Ascending aorta (tissue), 2 donors: ENCODE measurements at regions of chr17 and their contacts with region 1.

Region 1: GRCh38 chr17:42720996-42721583 is 23.8 kb downstream of the EZH1 start:
- DNase-seq: no peak
- H3K4me3 ChIP-seq: no peak overlapping the region
- H3K27ac ChIP-seq: no peak overlapping the region
- H3K4me1 ChIP-seq: no peaks in the 10 kb centered on the region
- H3K27me3 ChIP-seq: no peaks in the 10 kb centered on the region
- CTCF ChIP-seq: peak; percentile 65 to 73 (median 67)

Region 2: GRCh38 chr17:42760652-42761581 is 39.8 kb after region 1 on chr17 and contains the start of gene RAMP2:
- intact Hi-C with region 1: loop called (anchors 1 kb)
- DNase-seq: no peak
- H3K4me3 ChIP-seq: peak within 1 kb of the TSS; percentile 71 to 78
- H3K27ac ChIP-seq: peak within 1 kb of the TSS in 1 of 2 donors; percentile 55
- H3K4me1 ChIP-seq: peaks cover 8 to 10% of the 10 kb centered on the region in 2 donors
- H3K27me3 ChIP-seq: peaks cover 13% of the 10 kb centered on the region
- CTCF ChIP-seq: no peak
- total RNA-seq, gene RAMP2: 80.5 TPM

Region 3: DNA sequence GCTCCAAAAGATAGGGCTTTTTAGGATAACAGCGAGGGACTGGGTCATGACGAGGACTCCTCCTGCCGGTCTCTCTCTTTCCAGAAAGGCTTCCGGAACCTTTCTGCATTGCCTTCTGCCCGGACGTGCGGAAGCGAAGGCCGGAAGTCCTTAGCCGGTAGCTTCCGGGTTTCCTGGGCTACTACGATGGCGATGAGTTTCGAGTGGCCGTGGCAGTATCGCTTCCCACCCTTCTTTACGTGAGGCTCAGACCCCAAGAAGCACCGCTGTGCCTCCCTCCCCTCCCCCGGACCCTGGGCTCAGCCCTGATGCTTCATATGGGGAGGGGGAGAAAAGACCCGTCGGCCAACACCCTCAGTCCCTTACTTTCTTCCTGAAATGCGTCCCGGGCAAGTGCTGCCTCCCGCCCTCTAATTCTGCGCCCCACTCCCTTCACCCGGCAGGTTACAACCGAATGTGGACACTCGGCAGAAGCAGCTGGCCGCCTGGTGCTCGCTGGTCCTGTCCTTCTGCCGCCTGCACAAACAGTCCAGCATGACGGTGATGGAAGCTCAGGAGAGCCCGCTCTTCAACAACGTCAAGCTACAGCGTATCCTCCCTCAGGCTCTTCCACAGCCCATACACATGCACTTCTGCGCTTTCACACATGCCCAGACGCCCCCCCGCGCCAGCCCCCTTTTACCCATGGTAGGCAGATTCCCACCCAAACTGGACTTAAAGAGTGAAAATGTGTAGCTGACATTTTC is 52.4 kb after region 1 on chr17 and contains the start of gene VPS25:
- intact Hi-C with region 1: loop called (anchors 2 kb)
- DNase-seq: peak; percentile 17 to 87
- H3K4me3 ChIP-seq: peak within 1 kb of the TSS; percentile 79 to 81
- H3K27ac ChIP-seq: peak within 1 kb of the TSS; percentile 68 to 85
- H3K4me1 ChIP-seq: peaks cover 4 to 5% of the 10 kb centered on the region in 2 donors
- H3K27me3 ChIP-seq: no peaks in the 10 kb centered on the region
- CTCF ChIP-seq: peak in 1 of 3 experiments; percentile 13
- total RNA-seq, gene VPS25: 40.9 TPM

Region 4: DNA sequence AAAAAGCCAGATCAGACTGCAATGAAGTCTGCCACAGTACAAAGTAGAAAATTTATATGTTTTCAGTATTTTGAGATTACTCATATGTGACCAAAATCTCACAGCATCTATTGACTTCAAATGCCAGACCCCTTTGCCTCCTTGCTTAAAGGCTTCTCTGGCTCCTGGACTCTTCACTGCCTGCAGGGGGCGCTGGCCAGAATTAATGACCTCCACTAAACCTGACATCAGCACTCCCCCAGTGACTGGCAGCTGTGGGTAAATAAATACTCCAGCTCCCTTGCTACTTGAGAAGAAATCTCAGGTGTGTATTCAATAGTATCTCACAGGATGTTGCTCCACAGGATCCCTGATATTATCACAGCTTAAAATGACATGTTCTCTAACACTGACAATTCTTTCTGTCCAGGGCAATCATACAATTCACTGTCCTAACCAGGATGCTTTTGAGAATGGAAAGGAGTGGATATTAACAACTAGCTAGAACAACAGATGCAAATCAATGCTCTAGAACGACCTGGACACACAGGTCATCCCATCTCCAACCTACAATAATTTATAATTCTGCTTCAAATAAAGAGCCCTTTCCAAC is 99.0 kb after region 1 on chr17:
- intact Hi-C with region 1: loop called (anchors 5 kb)
- DNase-seq: no peak
- H3K4me3 ChIP-seq: no peak overlapping the region
- H3K27ac ChIP-seq: no peak overlapping the region
- H3K4me1 ChIP-seq: peaks cover 6 to 12% of the 10 kb centered on the region in 2 donors
- H3K27me3 ChIP-seq: no peaks in the 10 kb centered on the region
- CTCF ChIP-seq: peak in 2 of 3 experiments; percentile 49 to 58

Region 5: GRCh38 chr17:42937712-42938596 is 216.9 kb after region 1 on chr17:
- intact Hi-C with region 1: loop called (anchors 2 kb)
- DNase-seq: no peak
- H3K4me3 ChIP-seq: no peak overlapping the region
- H3K27ac ChIP-seq: no peak overlapping the region
- H3K4me1 ChIP-seq: no peaks in the 10 kb centered on the region
- H3K27me3 ChIP-seq: no peaks in the 10 kb centered on the region
- CTCF ChIP-seq: peak; percentile 45 to 78 (median 50)